ENCODE measurements at regions of chr2 and their contacts with region 1.

Region 1: DNA sequence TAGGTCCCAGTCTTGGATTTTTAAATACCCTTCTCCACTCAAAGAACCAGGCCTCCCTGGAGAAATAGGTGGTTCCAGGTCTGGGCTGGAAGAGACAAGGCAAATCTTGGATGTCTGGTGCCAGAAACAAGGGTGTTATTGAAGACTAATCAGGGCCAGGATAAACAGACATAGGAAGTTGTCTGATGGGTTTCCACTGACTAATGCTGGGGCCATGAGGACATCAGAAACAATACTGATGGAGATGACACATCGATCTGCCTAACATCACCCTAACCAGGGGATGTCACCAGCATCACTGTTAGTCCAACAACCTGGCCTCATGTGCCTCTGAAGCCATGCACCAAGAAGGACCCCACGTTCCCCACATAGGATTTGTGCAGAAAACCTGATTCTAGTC is 42.5 kb upstream of the GLI2 start:
- DNase-seq: peak; percentile 24
- H3K4me3 ChIP-seq: no peak overlapping the region
- H3K27ac ChIP-seq: no peak overlapping the region
- H3K4me1 ChIP-seq: no peaks in the 10 kb centered on the region
- H3K27me3 ChIP-seq: no peaks in the 10 kb centered on the region
- CTCF ChIP-seq: no peak

Region 2: DNA sequence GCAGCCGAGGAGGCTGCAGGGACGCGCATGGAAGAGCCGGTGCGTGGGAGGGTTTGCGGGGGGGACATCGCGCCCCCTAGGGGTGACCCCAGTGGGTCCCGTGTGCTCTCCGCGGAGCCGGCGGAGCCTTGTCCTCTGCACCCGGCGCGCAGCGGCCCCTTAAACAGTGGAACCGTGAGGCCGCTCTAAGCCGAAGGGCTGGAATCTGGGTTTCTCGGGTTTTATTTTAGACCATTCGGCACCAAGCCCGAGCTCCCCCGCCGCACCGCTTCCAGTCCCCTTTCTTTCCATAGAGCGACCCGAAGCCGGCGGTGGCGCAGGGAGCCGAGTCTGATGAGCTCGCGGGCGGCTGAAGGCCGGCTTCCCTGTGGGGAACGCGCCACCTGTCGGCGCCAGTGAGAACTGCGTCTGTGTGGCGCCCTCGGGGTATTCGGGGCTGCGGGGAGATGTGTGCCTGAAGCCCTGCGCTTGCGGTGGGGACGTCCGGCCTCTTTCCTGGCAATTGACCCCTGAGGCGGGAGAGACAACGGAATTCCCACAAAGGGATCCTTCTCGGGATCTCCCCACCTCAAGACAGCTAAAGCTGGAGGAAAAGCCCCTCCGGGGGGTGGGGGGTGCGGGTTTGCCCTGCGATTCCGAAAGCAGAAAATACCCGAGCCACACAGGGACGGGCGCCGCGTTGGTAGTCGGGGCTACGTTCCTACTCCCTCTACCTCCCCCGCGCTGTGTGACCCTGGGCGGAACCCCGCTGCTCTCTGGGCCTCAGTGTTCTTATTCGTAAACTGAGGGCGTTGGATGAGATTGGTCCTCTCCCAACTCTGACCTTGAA is 1837.5 kb before region 1 on chr2:
- CTCF ChIA-PET with region 1: no interaction called
- dilution Hi-C with region 1: no loop called
- in situ Hi-C with region 1: no loop called
- intact Hi-C with region 1: no loop called
- DNase-seq: peak; percentile 59
- H3K4me3 ChIP-seq: peak overlapping the region in 2 of 3 experiments; percentile 25 to 32
- H3K27ac ChIP-seq: no peak overlapping the region
- H3K4me1 ChIP-seq: peaks cover 8% of the 10 kb centered on the region
- H3K27me3 ChIP-seq: peaks cover 83% of the 10 kb centered on the region
- CTCF ChIP-seq: peak; percentile 76 to 92

Region 3: DNA sequence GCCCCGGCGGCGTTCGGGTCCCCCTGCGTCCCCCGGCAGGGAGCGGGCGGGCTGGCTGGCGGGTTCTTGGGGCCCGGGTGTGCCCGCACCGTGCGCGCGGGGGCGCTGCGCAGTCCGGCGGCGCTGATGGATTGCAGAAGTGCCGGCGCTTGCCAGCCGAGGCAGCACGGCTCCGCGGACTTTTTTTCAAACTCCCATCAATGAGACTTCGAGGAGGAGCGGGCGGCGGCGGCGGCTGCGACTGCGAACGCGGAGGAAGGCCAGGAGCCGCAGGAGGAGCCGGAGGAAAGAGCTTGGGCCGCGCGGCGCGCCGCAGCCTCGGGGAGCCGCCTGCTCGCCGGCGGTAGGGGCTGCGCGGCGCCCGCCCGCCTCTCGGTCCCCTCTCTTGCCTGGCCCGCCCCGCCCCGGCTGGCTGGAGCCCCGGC is 42.6 kb after region 1 on chr2 and contains the start of gene GLI2:
- CTCF ChIA-PET with region 1: no interaction called
- dilution Hi-C with region 1: no loop called
- in situ Hi-C with region 1: no loop called
- intact Hi-C with region 1: loop called (anchors 2 kb)
- DNase-seq: peak; percentile 71
- H3K4me3 ChIP-seq: peak within 1 kb of the TSS; percentile 28 to 45 (median 39)
- H3K27ac ChIP-seq: no peak within 1 kb of the TSS
- H3K4me1 ChIP-seq: peaks cover 20% of the 10 kb centered on the region
- H3K27me3 ChIP-seq: peaks cover 47% of the 10 kb centered on the region
- CTCF ChIP-seq: peak; percentile 21 to 67
- total RNA-seq, gene GLI2: under 0.01 TPM in 1 of 2 donors, not detected in the other

Region 4: DNA sequence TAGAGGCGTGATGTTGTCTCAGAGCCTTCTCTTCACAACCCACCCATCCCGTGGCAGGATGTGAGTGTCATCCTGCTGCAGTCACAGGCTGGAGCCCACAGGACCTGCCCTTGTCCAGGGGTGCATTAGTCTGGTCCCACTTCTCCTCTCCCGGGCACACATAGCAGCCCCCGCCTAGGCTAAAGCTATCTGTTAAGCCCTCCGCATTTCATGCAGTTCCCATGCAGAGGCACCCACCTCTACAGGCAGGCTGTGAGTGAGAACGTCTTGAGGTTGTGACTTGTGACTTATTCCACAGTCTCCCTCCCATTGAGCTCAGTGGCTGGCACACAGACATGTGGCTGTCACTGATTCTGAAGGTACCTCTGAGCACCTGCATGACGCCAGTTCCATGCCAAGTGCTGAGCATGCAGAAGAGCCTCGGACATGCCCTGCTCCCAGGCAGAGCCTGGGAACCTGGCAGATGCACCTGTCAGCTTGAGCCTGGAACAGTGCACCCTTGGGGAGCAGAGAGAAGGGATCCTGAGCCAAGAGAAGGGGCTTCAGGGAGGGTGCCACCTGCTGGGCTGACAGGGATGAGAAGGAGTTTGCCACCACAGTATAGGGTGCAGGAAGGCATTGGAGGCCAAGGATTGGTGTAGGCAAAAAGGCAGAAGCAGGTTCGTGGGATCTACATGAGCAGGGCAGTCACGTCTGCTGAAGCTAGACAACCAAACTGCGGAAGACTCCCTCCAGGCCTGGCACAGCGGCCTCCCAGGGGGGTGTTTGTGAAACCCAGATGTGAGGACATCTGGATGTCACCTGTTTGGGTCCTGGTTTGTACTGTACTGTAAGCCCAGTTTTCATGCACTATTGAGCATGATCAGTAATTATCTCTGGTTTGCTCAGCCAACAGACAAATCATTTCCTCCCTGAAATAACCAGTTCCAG is 256.2 kb after region 1 on chr2:
- CTCF ChIA-PET with region 1: no interaction called
- dilution Hi-C with region 1: no loop called
- in situ Hi-C with region 1: no loop called
- intact Hi-C with region 1: loop called (anchors 2 kb)
- DNase-seq: no peak
- H3K4me3 ChIP-seq: no peak overlapping the region
- H3K27ac ChIP-seq: no peak overlapping the region
- H3K4me1 ChIP-seq: peaks cover under 1% of the 10 kb centered on the region
- H3K27me3 ChIP-seq: peaks cover 6% of the 10 kb centered on the region
- CTCF ChIP-seq: peak; percentile 17 to 54

Region 5: DNA sequence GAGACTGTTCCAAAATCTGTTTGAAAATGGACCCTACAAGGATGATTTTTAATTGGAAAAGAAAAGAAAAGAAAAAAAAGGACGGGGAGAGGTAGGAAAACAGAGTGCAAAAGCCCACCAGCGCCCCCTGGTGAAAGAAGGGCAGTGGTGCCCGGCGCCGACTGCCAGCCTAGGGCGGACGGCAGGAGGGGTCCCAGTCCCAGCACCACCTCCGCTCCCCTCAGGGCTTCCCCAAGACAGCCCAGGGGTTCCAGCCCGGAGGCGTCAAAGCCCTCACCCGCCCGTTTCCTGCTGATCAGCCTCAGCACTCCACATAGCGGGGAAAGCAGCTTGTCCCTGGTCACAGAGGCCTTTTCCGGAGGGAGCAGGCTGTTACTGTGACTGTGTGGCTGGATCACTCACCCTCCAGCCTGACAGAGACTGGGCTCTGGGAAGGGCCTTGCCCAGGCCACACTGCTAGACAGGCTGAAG is 377.9 kb after region 1 on chr2:
- CTCF ChIA-PET with region 1: no interaction called
- dilution Hi-C with region 1: no loop called
- in situ Hi-C with region 1: loop called (anchors 5 kb)
- intact Hi-C with region 1: loop called (anchors 1 kb)
- DNase-seq: no peak
- H3K4me3 ChIP-seq: no peak overlapping the region
- H3K27ac ChIP-seq: no peak overlapping the region
- H3K4me1 ChIP-seq: peaks cover 5% of the 10 kb centered on the region
- H3K27me3 ChIP-seq: no peaks in the 10 kb centered on the region
- CTCF ChIP-seq: peak; percentile 72 to 88

Region 6: DNA sequence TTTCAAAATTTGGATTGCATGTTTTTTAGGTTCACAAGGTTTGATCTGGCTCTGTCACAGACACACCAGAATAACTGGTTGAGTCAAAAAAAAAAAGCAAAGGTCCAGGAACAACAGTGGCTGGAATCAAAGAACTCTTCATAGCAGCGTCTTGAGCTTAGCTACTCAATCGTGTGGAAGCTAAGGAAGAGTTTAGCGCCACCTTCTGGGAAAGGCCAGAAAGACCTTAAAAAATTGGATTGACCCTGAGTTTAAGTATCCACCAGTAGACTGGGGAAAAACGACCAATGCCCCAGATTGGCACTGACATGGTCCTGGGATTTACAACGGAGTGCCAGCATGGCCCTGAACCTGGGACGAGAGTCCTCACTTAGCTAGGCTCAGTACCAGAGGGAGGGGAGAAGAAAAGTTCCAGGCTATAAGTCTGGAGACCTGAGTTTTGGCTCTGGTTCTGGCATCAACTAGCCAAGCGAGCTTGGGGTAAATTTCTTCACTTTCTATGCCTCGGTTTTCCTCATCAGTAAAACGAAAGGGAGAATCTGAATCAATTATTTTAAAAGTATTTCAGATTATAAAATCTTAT is 663.0 kb after region 1 on chr2:
- CTCF ChIA-PET with region 1: no interaction called
- dilution Hi-C with region 1: no loop called
- in situ Hi-C with region 1: no loop called
- intact Hi-C with region 1: loop called (anchors 10 kb)
- DNase-seq: peak; percentile 57
- H3K4me3 ChIP-seq: no peak overlapping the region
- H3K27ac ChIP-seq: no peak overlapping the region
- H3K4me1 ChIP-seq: peaks cover 15% of the 10 kb centered on the region
- H3K27me3 ChIP-seq: no peaks in the 10 kb centered on the region
- CTCF ChIP-seq: peak; percentile 82 to 83

Measured in mammary epithelial cell (primary cell).